PC-3 (cell line): ENCODE measurements at regions of chr12 and their contacts with region 1.

Region 1: GRCh38 chr12:124863416-124864325 is at the start of gene SCARB1:
- DNase-seq: peak; percentile 86
- ATAC-seq: peak; percentile 81
- H3K4me3 ChIP-seq: peak within 1 kb of the TSS; percentile 92
- H3K27ac ChIP-seq: peak within 1 kb of the TSS; percentile 37
- H3K4me1 ChIP-seq: peaks cover 26% of the 10 kb centered on the region
- H3K27me3 ChIP-seq: no peaks in the 10 kb centered on the region
- CTCF ChIP-seq: no peak
- total RNA-seq, gene SCARB1: 79.1 and 80.5 TPM in 2 replicates

Region 2: GRCh38 chr12:124582108-124582424 is 281.6 kb before region 1 on chr12:
- CTCF ChIA-PET with region 1: no interaction called
- POLR2A ChIA-PET with region 1: no interaction called
- intact Hi-C with region 1: no loop called
- DNase-seq: no peak
- ATAC-seq: peak; percentile 33; the same call in 1 of the 2 replicates
- H3K4me3 ChIP-seq: no peak overlapping the region
- H3K27ac ChIP-seq: no peak overlapping the region
- H3K4me1 ChIP-seq: no peaks in the 10 kb centered on the region
- H3K27me3 ChIP-seq: no peaks in the 10 kb centered on the region
- CTCF ChIP-seq: no peak

Region 3: GRCh38 chr12:124774462-124775167 is 89.1 kb before region 1 on chr12:
- CTCF ChIA-PET with region 1: no interaction called
- POLR2A ChIA-PET with region 1: no interaction called
- intact Hi-C with region 1: loop called (anchors 5 kb)
- DNase-seq: peak; percentile 76
- ATAC-seq: peak; percentile 31
- H3K4me3 ChIP-seq: peak overlapping the region; percentile 16; the same call in 1 of the 2 replicates
- H3K27ac ChIP-seq: peak overlapping the region; percentile 49
- H3K4me1 ChIP-seq: peaks cover 34% of the 10 kb centered on the region
- H3K27me3 ChIP-seq: no peaks in the 10 kb centered on the region
- CTCF ChIP-seq: 0 out of 2 replicates have a peak, but pooled peaks have one; percentile 18

Region 4: DNA sequence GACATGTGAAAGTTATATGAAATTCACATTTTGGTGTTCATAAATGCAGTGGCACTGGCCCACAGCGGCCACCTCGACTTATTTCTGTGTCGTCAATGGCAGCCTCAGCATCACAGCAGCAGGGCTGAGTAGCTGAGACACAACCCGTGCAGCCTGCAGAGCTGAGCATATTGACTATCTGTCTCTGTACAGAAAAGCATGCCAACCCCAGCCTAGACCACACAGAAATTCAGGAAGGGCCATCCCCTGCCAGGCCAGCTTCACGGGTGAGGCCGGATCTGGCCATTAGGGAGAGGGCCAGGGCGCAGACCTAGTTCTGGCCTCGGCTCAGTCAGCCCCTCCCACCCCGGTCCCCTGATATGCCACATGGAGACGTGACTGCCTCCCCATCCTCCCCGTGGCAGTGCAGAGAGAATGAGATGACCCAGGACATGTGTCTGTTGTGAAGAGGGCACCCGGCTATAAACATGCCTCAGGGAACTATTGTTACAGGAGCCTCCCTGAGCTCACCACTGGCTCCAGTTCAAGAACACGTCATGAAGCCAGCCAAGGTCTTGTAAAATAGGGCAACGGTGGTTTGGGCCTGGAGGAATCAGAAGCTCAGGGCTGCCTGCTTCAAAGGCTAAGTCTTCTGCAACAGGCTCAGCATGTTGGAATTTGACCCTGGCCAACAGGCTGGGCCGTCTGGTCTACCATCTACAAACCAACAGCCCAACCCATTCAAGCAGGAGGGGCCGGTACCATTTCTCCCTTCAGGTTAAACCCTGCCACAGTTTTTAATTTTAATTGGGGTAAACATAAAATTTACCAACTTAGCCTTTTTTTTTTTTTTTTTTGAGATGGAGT is 25.5 kb before region 1 on chr12:
- CTCF ChIA-PET with region 1: interaction called, 3 read pairs
- POLR2A ChIA-PET with region 1: interaction called, 13 read pairs
- intact Hi-C with region 1: loop called (anchors 1 kb)
- DNase-seq: peak; percentile 100
- ATAC-seq: peak; percentile 93
- H3K4me3 ChIP-seq: peak overlapping the region; percentile 23; the same call in 1 of the 2 replicates
- H3K27ac ChIP-seq: peak overlapping the region; percentile 87
- H3K4me1 ChIP-seq: peaks cover 38% of the 10 kb centered on the region
- H3K27me3 ChIP-seq: no peaks in the 10 kb centered on the region
- CTCF ChIP-seq: no peak